ENCODE measurements at regions of chr1 and their contacts with region 1.

Region 1: GRCh38 chr1:181089677-181090409 is 1.3 kb downstream of the IER5 start:
- DNase-seq: peak; percentile 67

Region 2: DNA sequence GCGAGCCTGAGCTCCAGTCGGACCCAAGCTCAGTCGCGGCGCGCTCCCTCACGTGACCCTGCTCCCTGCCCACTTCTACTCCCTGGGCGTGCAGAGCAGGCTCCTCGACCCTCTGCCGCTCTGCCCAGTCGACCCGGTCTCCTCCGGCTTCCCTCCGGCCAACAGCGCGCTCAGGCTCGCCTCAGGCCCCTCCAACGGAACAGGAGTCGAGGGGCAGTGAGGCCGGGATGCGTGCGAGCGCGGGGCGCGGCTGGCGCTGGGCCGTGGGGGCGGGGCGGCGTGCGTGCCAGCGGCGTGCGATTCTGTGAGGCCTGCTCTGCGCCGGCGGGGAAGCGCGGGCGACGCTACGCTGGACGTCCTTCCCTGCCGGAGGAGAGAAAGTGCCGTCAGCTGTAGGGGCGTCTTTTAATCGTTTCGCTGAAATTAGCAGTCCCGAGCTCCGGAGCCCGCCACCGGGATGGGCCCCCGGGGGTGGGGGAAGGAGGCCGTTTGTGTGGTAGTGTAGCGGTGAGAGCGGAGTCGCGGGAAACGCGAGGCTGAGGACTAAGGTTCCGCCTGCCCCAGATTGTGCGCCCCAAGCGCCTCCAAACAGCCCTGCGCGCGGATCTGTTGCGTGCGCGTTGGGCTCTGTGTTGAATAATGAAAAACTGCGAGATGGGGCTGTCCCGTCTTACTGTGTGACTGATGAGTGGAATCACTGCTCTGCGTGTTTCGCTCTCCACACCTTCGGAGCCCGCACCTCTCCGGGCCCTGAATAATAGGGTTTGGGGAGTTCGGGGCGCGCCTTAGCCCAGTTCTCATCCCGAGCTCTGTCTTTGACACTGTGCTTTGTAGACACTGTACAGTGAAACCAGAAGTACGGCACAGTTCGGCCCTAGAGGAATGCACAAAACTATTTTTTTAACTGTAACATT is 587.2 kb before region 1 on chr1 and contains the start of gene ACBD6:
- in situ Hi-C with region 1: no loop called
- DNase-seq: peak; percentile 86
- total RNA-seq, gene ACBD6: 89.5 and 98.8 TPM in 2 replicates

Region 3: GRCh38 chr1:181033799-181034451 is 55.9 kb before region 1 on chr1 and contains the start of gene MR1:
- in situ Hi-C with region 1: loop called (anchors 5 kb)
- DNase-seq: peak; percentile 89
- total RNA-seq, gene MR1: 8.3 and 10.6 TPM in 2 replicates

Measured in G401 (cell line).